AG04450 (cell line): ENCODE measurements at regions of chr1 and their contacts with region 1.

Region 1: DNA sequence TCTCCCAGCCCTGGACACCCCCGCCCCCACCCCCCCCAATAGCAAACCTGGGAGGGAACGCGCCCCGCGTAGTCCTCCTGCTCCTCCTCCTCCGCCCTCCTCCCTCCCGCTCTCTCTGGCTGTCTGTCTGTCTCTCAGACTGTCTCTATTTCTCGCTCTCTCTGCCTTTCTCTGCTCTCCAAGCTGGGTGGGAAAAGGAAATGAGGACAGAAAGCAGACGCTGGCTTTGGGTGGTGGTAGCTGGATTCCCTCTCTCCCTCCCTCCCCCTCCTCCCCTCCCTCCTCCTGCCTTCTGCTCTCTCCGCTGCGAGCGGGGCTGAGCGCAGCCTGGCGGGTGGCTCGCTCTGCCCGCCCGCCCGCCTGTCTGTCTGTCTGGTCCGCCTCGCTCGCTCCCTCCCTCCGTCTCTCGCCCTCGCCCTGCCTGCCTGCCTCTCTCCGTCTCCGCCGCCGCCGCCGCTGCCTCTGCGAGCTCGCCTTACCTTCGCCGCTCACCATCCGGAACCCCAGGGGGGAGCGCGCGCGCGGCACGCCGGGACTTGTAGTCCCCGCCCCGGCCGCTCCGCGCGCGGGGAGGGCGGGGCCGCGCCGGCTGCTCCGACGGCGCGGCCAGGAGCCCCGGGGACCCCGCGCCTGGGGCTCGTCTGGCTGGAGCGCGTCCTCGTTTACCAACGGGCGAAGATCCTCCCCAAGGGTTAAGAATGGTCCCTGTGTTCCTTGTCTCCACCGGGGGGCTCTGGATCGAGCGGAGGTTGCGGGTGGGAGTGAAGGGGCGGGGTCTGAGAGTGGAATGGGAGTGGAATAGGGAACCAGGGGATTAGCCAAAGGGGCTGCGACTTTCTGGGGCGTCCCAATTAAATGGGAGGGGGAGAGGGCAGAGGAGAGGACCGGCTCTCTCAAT is at the start of gene AHDC1:
- DNase-seq: peak; percentile 61
- H3K4me3 ChIP-seq: peak within 1 kb of the TSS; percentile 88
- H3K27ac ChIP-seq: peak within 1 kb of the TSS; percentile 21
- H3K27me3 ChIP-seq: no peaks in the 10 kb centered on the region
- CTCF ChIP-seq: no peak
- polyA plus RNA-seq, gene AHDC1: 2.8 and 3.0 TPM in 2 replicates

Region 2: GRCh38 chr1:27365372-27366112 is 238.4 kb before region 1 on chr1:
- CTCF ChIA-PET with region 1: interaction called, 12 read pairs
- POLR2A ChIA-PET with region 1: interaction called, 11 read pairs
- DNase-seq: peak; percentile 67
- H3K4me3 ChIP-seq: peak overlapping the region; percentile 74
- H3K27ac ChIP-seq: peak overlapping the region; percentile 90
- H3K27me3 ChIP-seq: no peaks in the 10 kb centered on the region
- CTCF ChIP-seq: no peak

Region 3: DNA sequence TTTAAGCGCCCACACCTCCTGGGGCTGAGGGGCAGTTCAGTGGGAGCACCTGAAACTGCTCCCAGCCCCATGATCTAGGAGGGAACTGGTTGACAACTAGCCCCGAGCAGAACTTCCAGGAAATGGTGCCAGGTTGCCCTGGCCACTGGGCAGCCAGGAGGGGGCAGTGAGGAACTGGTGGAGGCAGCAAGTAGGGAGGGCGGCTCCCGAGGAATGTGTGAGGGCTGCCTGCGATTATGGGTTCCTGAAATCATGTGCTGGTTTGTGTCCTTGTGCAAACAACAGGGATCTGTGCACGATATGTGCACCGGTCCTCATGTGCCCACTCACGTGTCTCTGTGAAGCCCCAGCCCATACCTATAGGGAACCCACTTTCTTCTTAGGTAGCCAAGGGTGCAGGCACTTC is 201.6 kb before region 1 on chr1:
- CTCF ChIA-PET with region 1: interaction called, 20 read pairs
- POLR2A ChIA-PET with region 1: interaction called, 4 read pairs
- DNase-seq: no peak
- H3K4me3 ChIP-seq: no peak overlapping the region
- H3K27ac ChIP-seq: no peak overlapping the region
- H3K27me3 ChIP-seq: no peaks in the 10 kb centered on the region
- CTCF ChIP-seq: peak; percentile 52

Region 4: DNA sequence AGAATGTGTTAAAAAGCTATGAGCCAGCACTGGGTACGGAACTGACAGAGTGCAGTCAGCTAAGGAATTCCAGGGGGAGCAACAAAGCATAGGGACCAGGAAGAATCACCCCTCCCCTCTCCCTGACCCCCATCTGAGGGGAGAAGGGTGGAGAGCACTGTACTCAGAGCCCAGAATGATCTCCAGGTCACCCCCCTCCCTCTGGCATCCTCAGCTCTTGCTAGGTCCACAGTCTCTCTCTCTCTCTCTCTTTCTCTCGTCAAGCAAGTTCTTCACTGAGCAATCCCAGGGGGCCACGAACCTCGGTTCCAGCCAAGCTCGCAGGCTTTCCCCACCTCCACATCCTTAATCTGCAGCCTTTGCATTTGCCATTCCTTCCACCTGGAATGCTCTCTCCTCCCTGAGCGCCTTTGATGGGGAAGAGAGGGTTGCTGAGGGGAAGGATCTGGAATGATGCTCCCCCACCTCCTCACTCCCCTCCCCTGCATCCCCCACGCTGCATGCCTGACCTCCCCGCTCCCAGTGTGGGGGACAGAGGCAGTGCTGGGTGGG is 107.2 kb before region 1 on chr1:
- CTCF ChIA-PET with region 1: interaction called, 15 read pairs
- POLR2A ChIA-PET with region 1: no interaction called
- DNase-seq: no peak
- H3K4me3 ChIP-seq: no peak overlapping the region
- H3K27ac ChIP-seq: no peak overlapping the region
- H3K27me3 ChIP-seq: no peaks in the 10 kb centered on the region
- CTCF ChIP-seq: peak; percentile 64

Region 5: DNA sequence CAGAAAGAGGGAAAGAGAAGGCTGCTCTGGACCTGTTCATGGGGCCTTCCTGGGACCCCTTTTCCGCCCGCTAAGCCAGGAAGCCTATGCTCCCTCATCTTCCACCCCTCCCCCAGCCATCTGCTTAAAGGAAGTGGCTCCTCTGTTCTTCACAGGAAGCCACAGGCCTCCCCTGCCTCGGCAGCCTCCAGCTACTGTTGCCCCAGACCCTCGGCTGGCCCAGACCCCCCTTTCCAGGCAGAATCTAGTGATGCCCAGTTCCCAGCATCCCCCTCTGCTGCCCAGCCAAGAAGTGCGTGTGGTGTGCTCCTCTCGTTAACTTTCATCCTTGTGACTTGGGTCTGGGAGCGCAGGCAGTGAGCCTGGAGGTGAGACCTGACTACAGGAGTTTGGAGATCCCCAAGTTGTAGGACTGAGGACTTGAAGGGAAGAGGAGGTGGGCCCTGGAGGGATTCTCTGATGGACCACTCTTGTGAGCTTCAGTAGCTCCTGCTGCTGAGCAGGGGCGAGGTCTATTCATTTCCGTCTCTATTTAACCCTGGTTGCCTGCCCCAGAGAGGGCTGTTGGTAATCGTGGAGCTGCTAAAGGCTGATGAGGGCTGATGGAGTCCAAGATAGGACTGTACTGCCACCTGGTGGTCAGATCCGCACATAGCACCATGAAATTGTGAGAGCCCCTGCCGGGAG is 58.9 kb after region 1 on chr1:
- CTCF ChIA-PET with region 1: interaction called, 113 read pairs
- POLR2A ChIA-PET with region 1: interaction called, 3 read pairs
- DNase-seq: no peak
- H3K4me3 ChIP-seq: no peak overlapping the region
- H3K27ac ChIP-seq: peak overlapping the region; percentile 21
- H3K27me3 ChIP-seq: no peaks in the 10 kb centered on the region
- CTCF ChIP-seq: peak; percentile 87

Region 6: GRCh38 chr1:28127617-28128257 is 523.8 kb after region 1 on chr1:
- CTCF ChIA-PET with region 1: no interaction called
- POLR2A ChIA-PET with region 1: no interaction called
- DNase-seq: no peak
- H3K4me3 ChIP-seq: no peak overlapping the region
- H3K27ac ChIP-seq: no peak overlapping the region
- H3K27me3 ChIP-seq: no peaks in the 10 kb centered on the region
- CTCF ChIP-seq: no peak